Adrenal gland (tissue), 19 donors: ENCODE measurements at regions of chr5 and their contacts with region 1.

Region 1: DNA sequence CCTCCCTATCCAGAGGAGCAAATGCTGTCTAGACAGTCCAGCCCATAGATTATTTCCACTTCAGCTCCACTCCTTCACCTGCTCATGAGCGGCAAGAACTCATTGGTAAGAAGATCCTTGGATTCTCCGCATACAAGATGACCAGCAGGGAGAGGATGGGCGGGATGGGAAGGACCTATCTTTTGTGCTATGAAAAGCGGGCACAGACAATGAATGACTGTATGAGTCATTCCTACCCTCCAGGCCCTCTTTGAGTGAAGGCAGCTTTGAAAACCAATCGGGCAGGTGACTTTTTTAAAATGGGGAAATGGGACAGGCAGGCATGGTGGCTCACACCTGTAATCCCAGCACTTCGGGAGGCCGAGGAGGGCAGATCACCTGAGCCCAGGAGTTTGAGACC is 49.5 kb downstream of the SMIM23 start:
- DNase-seq: no peak
- H3K4me3 ChIP-seq: no peak overlapping the region
- H3K27ac ChIP-seq: no peak overlapping the region
- H3K4me1 ChIP-seq: no peaks in the 10 kb centered on the region
- H3K27me3 ChIP-seq: no peaks in the 10 kb centered on the region
- CTCF ChIP-seq: no peak
- POLR2A ChIP-seq: no peak

Region 2: DNA sequence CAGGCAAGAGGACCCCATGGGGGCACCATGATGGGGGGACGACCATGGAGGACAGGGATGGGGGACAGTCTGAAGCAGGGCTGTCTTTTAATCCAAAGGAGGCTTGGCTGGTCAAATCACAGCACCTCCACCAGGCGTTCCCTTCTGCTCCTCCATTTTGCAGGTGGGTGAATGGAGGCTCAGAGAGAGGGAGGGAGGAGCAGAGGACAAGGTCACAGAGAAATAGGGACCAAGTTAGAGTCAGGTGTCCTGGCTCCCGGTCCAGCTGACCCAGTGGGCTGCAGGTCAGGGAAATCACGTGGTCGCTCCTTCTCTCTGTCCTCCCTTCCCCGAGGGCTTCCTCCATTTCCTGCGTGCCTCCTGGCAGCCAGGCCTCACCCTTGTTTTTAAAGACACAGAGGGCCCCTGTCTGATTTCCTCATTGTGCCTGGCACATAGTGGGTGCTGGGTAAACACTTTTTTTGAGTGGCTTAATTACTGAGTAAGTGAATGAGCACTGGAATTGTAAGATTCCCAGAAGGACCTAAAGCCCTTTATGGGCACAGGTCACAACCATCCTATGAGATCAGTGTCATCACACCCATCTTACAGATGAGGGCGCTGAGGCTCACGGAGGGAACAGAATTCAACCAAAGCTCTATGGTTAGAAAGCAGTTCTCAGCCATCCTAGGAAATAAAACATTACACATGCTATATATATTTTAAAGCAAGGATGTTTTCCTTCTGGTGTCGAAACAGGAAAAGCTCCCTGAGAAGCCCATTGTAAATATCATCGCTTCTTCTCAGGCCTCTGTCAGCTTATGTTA is 205.7 kb before region 1 on chr5:
- intact Hi-C with region 1: loop called in 1 of 2 experiments (anchors 10 kb)
- DNase-seq: no peak
- H3K4me3 ChIP-seq: no peak overlapping the region
- H3K27ac ChIP-seq: no peak overlapping the region
- H3K4me1 ChIP-seq: peaks cover 0 to 9% of the 10 kb centered on the region in 2 donors
- H3K27me3 ChIP-seq: peaks cover 10% of the 10 kb centered on the region
- CTCF ChIP-seq: no peak
- POLR2A ChIP-seq: no peak

Region 3: DNA sequence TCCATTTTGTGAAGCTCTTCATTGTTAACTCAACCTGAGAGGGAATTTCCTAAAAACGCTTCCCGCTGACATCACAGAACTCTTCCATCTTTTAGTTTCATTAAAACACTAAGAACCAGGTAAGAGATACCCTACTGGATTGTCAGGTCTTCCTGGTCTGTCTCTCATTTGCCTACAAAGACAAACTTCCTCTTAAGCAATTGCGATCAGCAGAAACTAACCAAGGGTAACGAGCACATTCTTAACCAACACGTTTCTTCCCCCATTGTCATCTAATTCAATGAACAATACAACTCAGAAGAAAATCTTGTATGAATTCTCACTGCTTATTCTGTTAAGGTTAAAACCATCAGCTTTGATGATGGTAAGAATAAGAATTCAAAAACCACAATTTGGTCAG is 164.8 kb after region 1 on chr5:
- intact Hi-C with region 1: no loop called
- DNase-seq: no peak
- H3K4me3 ChIP-seq: no peak overlapping the region
- H3K27ac ChIP-seq: no peak overlapping the region
- H3K4me1 ChIP-seq: peaks cover 28 to 65% of the 10 kb centered on the region in 2 donors
- H3K27me3 ChIP-seq: no peaks in the 10 kb centered on the region
- CTCF ChIP-seq: no peak
- POLR2A ChIP-seq: no peak